ENCODE measurements at regions of chr19 and their contacts with region 1.

Region 1: DNA sequence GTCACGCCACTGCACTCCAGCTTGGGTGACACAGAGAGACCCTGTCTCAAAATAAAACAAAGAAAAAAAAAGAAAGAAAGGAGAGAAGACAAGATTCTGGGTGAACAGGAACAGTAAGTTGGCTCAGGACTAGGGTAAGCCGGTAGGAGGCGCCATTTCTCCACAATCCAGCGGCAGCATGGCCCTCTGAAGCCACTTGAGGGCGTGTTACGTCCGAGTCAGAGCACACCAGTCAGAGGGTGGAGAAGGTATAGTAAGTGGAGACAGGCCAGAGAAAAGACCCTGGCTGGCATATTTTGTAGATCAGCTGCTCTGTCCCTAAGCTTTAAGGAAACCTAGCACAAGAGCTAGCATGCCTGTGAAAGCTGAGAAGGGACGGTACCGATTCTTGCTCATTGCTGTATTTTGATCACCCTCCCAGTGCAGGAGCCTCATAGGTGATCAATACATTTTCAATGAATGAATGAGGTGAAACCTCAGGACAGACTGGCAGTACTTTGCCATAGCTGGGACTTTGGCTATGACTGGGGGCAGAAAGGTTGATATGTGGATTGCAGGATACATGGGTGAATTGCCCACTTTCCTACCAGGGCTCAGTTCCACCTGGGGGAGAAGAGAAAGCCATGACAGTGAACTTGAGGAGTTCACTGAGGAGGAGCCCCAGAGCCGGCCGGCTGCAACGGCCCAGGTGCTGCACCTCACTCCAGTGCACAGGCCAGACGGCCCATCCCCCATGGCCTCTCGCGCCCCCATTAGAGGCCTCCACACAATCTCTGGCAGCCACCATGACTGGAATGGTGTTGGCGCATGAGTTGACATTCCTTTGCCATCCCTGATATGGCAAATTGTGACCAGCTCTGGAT is 23.5 kb downstream of the POU2F2 start:
- DNase-seq: peak; percentile 85 to 91 (median 87)
- ATAC-seq: peak; percentile 98
- H3K4me3 ChIP-seq: no peak overlapping the region
- H3K27ac ChIP-seq: no peak overlapping the region
- H3K4me1 ChIP-seq: peaks cover 0 to 5% of the 10 kb centered on the region in 2 experiments; a peak in 2 of 5 replicates
- H3K27me3 ChIP-seq: peaks cover under 1 to 19% of the 10 kb centered on the region in 2 experiments; a peak in 2 of 5 replicates
- CTCF ChIP-seq: peak; percentile 100
- EP300 ChIP-seq: no peak
- POLR2A ChIP-seq: no peak
- RAD21 ChIP-seq: peak; percentile 91 to 100

Region 2: GRCh38 chr19:42184401-42184861 is 75.7 kb after region 1 on chr19:
- CTCF ChIA-PET with region 1: interaction called, 6 read pairs
- POLR2A ChIA-PET with region 1: no interaction called
- in situ Hi-C with region 1: no loop called
- intact Hi-C with region 1: loop called (anchors 1 kb)
- DNase-seq: peak; percentile 81 to 86 (median 86)
- ATAC-seq: peak; percentile 98
- H3K4me3 ChIP-seq: no peak overlapping the region
- H3K27ac ChIP-seq: no peak overlapping the region
- H3K4me1 ChIP-seq: peaks cover 0 to 6% of the 10 kb centered on the region in 2 experiments; a peak in 2 of 5 replicates
- H3K27me3 ChIP-seq: peaks cover 14 to 19% of the 10 kb centered on the region in 2 experiments
- CTCF ChIP-seq: peak; percentile 83 to 95 (median 87)
- EP300 ChIP-seq: no peak
- POLR2A ChIP-seq: no peak
- RAD21 ChIP-seq: peak; percentile 58 to 80

Region 3: DNA sequence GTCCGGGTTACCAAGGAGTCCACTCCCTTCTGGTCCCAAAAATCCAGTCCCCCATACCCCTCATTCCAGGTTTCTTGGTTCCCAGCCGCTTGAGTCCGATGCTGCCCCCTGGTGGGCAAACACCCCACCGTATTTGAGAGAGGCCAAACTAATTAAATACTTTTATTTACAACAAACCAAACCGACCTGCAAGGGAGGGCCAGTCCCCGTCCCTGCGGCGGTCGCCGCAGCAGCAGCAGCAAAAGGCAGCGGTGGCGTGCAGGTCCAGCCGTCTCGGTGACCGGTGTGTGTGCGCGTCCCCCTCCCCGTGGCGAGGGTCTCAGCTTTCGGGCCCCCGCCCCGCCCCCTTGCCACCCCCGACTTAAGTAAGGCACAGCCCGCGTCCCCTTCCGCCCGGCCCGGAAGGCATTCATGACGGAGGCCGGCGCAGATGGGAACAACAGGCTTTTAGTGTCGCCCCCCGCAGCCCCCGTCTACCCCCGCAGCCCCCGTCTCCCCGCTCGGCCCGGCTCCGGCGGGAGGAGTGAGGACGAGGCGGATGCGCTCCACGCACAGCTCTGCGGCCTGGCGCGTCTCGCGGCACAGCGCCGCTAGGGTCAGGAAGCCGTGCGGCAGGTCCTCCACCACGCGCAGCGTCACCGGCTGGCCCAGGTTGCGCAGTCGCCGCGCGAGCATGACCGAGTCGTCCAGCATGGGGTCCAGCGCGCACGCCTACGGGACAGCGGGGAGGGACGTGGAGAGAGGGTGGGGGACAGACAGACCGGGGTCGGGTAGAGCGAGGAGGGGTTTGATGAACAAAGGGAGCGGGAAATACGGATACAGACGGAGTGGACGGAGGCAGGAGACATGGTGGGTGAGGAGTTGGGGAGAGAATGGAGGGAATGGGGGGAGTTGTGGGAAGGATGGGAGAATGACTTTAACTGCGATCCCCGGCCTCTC is 292.9 kb after region 1 on chr19:
- CTCF ChIA-PET with region 1: interaction called, 16 read pairs
- POLR2A ChIA-PET with region 1: interaction called, 3 read pairs
- in situ Hi-C with region 1: no loop called
- intact Hi-C with region 1: no loop called
- DNase-seq: peak; percentile 76 to 85 (median 81)
- ATAC-seq: peak; percentile 59
- H3K4me3 ChIP-seq: no peak overlapping the region; the same call in 1 of the 2 replicates
- H3K27ac ChIP-seq: no peak overlapping the region
- H3K4me1 ChIP-seq: peaks cover 5 to 30% of the 10 kb centered on the region in 2 experiments; a peak in 3 of 5 replicates
- H3K27me3 ChIP-seq: peaks cover 0 to 9% of the 10 kb centered on the region in 2 experiments; a peak in 3 of 5 replicates
- CTCF ChIP-seq: peak; percentile 85 to 88 (median 85)
- EP300 ChIP-seq: no peak
- POLR2A ChIP-seq: no peak
- RAD21 ChIP-seq: peak in 1 of 2 experiments; percentile 61; a peak in 2 of 4 replicates

Region 4: DNA sequence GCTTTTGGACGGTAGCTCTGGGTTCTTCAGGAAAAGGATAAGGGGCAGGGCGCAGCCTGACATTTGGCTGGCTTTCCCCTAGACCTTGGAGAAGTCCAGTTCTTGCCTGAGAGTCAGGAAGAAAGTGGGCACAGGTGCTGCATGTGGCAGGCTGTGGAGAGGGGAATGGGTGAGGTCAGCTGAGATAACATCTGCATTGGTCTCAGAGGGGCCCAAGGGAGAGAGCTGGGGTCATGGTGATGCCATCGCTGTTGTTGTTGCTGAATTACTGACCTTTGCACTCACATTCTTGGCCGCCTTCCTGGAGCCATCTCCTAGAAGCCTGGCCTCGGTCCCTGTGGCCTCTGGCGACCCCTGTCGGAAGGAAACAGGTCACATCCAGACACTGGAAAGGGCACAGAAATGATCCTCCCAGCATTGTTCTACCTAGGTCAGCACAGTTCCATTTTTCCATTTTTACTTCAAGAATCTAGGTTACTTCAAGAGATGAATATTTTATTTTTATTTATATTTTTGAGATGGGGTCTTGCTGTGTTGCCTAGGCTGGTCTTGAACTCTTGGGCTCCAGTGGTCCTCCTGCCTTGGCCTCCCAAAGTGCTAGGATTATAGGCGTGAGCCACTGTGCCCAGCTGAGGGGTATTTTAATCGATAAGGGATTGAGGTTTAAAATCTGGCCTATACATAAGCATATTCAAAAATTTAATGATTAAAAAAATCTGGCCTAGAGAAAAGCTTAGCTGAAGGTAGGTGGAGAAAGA is 324.9 kb after region 1 on chr19:
- CTCF ChIA-PET with region 1: interaction called, 24 read pairs
- POLR2A ChIA-PET with region 1: no interaction called
- in situ Hi-C with region 1: loop called (anchors 5 kb)
- intact Hi-C with region 1: loop called (anchors 1 kb)
- DNase-seq: peak; percentile 61 to 88 (median 71)
- ATAC-seq: peak; percentile 98
- H3K4me3 ChIP-seq: no peak overlapping the region
- H3K27ac ChIP-seq: no peak overlapping the region
- H3K4me1 ChIP-seq: peaks cover 0 to 9% of the 10 kb centered on the region in 2 experiments; a peak in 2 of 5 replicates
- H3K27me3 ChIP-seq: no peaks in the 10 kb centered on the region
- CTCF ChIP-seq: peak; percentile 94 to 98 (median 95)
- EP300 ChIP-seq: no peak
- POLR2A ChIP-seq: no peak
- RAD21 ChIP-seq: peak; percentile 80 to 94

Region 5: GRCh38 chr19:42440357-42441048 is 331.7 kb after region 1 on chr19:
- CTCF ChIA-PET with region 1: interaction called, 24 read pairs
- POLR2A ChIA-PET with region 1: no interaction called
- in situ Hi-C with region 1: no loop called
- intact Hi-C with region 1: no loop called
- DNase-seq: peak; percentile 80 to 89 (median 82)
- ATAC-seq: peak; percentile 90
- H3K4me3 ChIP-seq: no peak overlapping the region
- H3K27ac ChIP-seq: no peak overlapping the region
- H3K4me1 ChIP-seq: no peaks in the 10 kb centered on the region; a peak in 1 of 5 replicates
- H3K27me3 ChIP-seq: no peaks in the 10 kb centered on the region; a peak in 1 of 5 replicates
- CTCF ChIP-seq: peak; percentile 87 to 95 (median 89)
- EP300 ChIP-seq: no peak
- POLR2A ChIP-seq: no peak
- RAD21 ChIP-seq: peak; percentile 23 to 64; a peak in 3 of 4 replicates

Region 6: GRCh38 chr19:42529248-42529764 is 420.5 kb after region 1 on chr19:
- CTCF ChIA-PET with region 1: interaction called, 6 read pairs
- POLR2A ChIA-PET with region 1: no interaction called
- in situ Hi-C with region 1: loop called (anchors 25 kb)
- intact Hi-C with region 1: no loop called
- DNase-seq: peak; percentile 72 to 79 (median 78)
- ATAC-seq: peak; percentile 97
- H3K4me3 ChIP-seq: no peak overlapping the region
- H3K27ac ChIP-seq: no peak overlapping the region
- H3K4me1 ChIP-seq: no peaks in the 10 kb centered on the region; a peak in 1 of 5 replicates
- H3K27me3 ChIP-seq: peaks cover 11 to 16% of the 10 kb centered on the region in 2 experiments; a peak in 4 of 5 replicates
- CTCF ChIP-seq: peak; percentile 86 to 96 (median 88)
- EP300 ChIP-seq: no peak
- POLR2A ChIP-seq: no peak
- RAD21 ChIP-seq: peak; percentile 83 to 86

Measured in K562 (cell line).